ENCODE measurements at regions of chr7 and their contacts with region 1.

Region 1: GRCh38 chr7:151017953-151018420 is 6.3 kb downstream of the ATG9B start:
- DNase-seq: peak; percentile 83
- ATAC-seq: peak; percentile 72
- H3K4me3 Mint-ChIP-seq: peak overlapping the region; percentile 85
- H3K27ac Mint-ChIP-seq: no peak overlapping the region
- H3K4me1 Mint-ChIP-seq: peaks cover 45% of the 10 kb centered on the region
- H3K27me3 Mint-ChIP-seq: peaks cover 32% of the 10 kb centered on the region
- CTCF ChIP-seq: peak; percentile 78

Region 2: DNA sequence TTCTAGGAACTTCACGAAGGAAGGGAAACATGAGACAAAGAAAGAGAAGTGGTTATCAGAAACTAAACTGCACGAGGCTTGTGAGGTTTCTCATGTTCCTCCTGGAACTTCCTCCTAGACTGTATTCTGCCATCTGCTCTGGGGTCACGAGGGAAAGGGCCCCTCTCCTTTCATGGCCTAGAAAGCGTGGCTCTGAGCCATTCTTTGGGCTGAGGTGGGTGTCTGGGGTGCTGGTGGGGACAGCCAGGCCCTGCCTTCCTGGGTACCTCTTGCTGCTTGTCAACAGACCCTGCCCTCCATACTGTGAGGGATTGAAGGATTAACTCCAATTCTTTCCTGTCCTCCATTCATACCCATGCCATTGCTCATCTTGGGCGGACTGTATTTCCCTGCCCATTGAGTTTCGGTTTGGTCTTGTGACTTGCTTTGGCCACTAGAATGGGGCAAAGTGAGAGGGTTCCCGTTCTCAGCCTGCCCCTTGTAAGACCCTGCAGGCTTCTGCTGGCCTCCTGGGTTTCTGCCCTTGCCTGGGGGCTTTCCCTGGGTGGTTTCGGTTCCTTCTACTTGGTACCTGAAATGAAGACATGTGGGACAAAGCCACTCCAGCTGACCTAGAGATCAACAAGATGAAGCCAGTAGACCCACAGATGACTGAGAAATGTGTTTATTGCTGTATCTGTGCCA is 582.5 kb before region 1 on chr7:
- CTCF ChIA-PET with region 1: no interaction called
- POLR2A ChIA-PET with region 1: no interaction called
- intact Hi-C with region 1: loop called (anchors 5 kb)
- DNase-seq: peak; percentile 74
- ATAC-seq: peak; percentile 92
- H3K4me3 Mint-ChIP-seq: peak overlapping the region; percentile 73
- H3K27ac Mint-ChIP-seq: peak overlapping the region; percentile 96
- H3K4me1 Mint-ChIP-seq: peaks cover 63% of the 10 kb centered on the region
- H3K27me3 Mint-ChIP-seq: peaks cover 2% of the 10 kb centered on the region
- CTCF ChIP-seq: no peak

Region 3: DNA sequence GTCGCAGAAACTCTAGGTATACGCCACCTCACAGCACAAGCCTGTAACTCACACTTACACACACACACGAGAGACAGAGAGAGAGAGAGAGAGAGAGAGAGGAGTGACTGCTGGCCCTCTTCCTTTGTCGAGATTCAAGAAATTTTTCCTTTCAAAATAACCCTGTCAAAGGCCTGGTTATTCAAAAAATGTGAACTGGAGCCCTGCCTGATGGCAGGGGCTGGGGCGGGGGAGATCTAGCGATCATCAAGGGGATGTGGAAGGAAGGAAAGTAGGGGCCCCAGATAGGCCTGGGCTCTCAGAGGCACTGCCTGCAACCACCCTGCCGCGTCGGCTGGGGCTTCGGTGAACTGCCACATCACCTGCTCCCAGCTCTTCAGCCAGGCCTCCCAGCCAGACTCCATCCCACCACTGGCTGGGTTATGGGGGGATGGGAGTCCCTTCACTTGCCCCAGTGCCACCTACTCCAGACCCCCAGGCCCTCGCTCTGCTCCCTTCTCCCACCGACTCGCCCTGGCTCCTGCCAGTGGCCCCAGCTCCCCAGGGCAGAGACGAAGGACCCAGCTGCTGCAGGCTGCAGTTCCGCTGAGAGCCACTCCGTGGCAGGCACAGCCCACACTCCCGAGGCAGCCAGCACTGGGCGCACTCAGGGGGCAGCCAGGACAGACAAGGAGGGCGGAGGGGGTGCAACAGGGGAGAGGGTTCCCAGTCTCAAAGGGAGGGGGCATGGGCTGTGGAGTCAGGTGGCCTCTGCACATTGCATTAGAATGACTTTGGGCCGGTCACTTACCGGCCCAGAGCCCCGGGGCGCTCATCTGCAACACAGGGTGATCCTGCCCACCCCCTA is 55.2 kb before region 1 on chr7:
- CTCF ChIA-PET with region 1: interaction called, 9 read pairs
- POLR2A ChIA-PET with region 1: no interaction called
- intact Hi-C with region 1: loop called (anchors 1 kb)
- DNase-seq: peak; percentile 36
- ATAC-seq: peak; percentile 94
- H3K4me3 Mint-ChIP-seq: no peak overlapping the region
- H3K27ac Mint-ChIP-seq: no peak overlapping the region
- H3K4me1 Mint-ChIP-seq: no peaks in the 10 kb centered on the region
- H3K27me3 Mint-ChIP-seq: peaks cover 45% of the 10 kb centered on the region
- CTCF ChIP-seq: no peak

Region 4: GRCh38 chr7:151028131-151028947 is 10.4 kb after region 1 on chr7 and contains the start of gene ABCB8:
- CTCF ChIA-PET with region 1: interaction called, 25 read pairs
- POLR2A ChIA-PET with region 1: interaction called, 21 read pairs
- intact Hi-C with region 1: loop called (anchors 1 kb)
- DNase-seq: peak; percentile 94
- ATAC-seq: peak; percentile 93
- H3K4me3 Mint-ChIP-seq: peak within 1 kb of the TSS; percentile 96
- H3K27ac Mint-ChIP-seq: peak within 1 kb of the TSS; percentile 97
- H3K4me1 Mint-ChIP-seq: peaks cover 22% of the 10 kb centered on the region
- H3K27me3 Mint-ChIP-seq: peaks cover 9% of the 10 kb centered on the region
- CTCF ChIP-seq: no peak
- total RNA-seq, gene ABCB8: 38.9 and 46.5 TPM in 2 replicates

Region 5: GRCh38 chr7:151080522-151081169 is 62.7 kb after region 1 on chr7 and contains the start of gene FASTK:
- CTCF ChIA-PET with region 1: interaction called, 3 read pairs
- POLR2A ChIA-PET with region 1: no interaction called
- intact Hi-C with region 1: loop called (anchors 2 kb)
- DNase-seq: peak; percentile 81
- ATAC-seq: peak; percentile 83
- H3K4me3 Mint-ChIP-seq: peak within 1 kb of the TSS; percentile 91
- H3K27ac Mint-ChIP-seq: peak within 1 kb of the TSS; percentile 70
- H3K4me1 Mint-ChIP-seq: peaks cover 49% of the 10 kb centered on the region
- H3K27me3 Mint-ChIP-seq: peaks cover 8% of the 10 kb centered on the region
- CTCF ChIP-seq: no peak
- total RNA-seq, gene FASTK: 97.6 and 103 TPM in 2 replicates

Region 6: GRCh38 chr7:151110941-151111645 is 93.1 kb after region 1 on chr7:
- CTCF ChIA-PET with region 1: interaction called, 5 read pairs
- POLR2A ChIA-PET with region 1: interaction called, 3 read pairs
- intact Hi-C with region 1: loop called (anchors 1 kb)
- DNase-seq: peak; percentile 55
- ATAC-seq: peak; percentile 81
- H3K4me3 Mint-ChIP-seq: no peak overlapping the region
- H3K27ac Mint-ChIP-seq: no peak overlapping the region
- H3K4me1 Mint-ChIP-seq: peaks cover 2% of the 10 kb centered on the region
- H3K27me3 Mint-ChIP-seq: peaks cover 27% of the 10 kb centered on the region
- CTCF ChIP-seq: no peak

Measured in activated B cell treated with CpG ODN at 0.5 μM for 24 hours (primary cell).